AG04449 (cell line): ENCODE measurements at regions of chr6 and their contacts with region 1.

Region 1: GRCh38 chr6:83215131-83216047 is 22.2 kb downstream of the RWDD2A start:
- DNase-seq: no peak
- H3K4me3 ChIP-seq: no peak overlapping the region
- CTCF ChIP-seq: peak; percentile 86

Region 2: DNA sequence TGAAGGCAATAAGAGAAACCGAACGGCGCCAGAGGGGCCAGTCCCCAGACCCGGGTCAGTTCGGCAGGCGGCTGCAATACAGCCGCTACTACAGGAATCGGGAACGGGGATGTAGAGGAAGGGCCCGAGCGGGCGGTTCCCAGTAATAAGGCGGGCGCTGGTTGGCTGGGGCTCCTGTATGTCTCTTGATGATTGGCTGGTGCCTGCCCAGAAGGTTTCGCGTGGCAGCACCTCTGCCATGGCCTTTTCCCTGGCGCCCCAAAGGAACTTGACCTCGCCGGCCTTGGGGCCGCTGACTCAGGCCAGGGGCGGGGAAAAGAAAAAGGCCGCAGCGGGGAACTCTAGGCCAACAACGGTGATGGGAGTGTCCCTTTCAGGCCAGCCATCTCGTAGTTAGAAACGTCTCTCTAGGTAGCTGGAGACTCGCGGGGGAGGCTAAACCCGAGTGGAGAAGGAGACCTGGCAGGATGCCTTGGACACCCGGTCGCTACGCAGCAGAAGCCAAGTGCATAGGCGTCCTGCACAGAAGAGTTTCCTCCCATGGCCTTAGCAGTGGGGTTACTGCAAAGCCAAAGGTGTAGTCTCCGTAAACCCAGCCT is 967.7 kb before region 1 on chr6 and contains the start of gene IBTK:
- CTCF ChIA-PET with region 1: interaction called, 10 read pairs
- POLR2A ChIA-PET with region 1: no interaction called
- DNase-seq: no peak
- H3K4me3 ChIP-seq: peak within 1 kb of the TSS; percentile 77
- CTCF ChIP-seq: no peak

Region 3: GRCh38 chr6:83192871-83193746 is 22.3 kb before region 1 on chr6 and contains the starts of genes PGM3 and RWDD2A:
- CTCF ChIA-PET with region 1: interaction called, 33 read pairs
- POLR2A ChIA-PET with region 1: no interaction called
- DNase-seq: no peak
- H3K4me3 ChIP-seq: peak within 1 kb of the TSS; percentile 91
- CTCF ChIP-seq: no peak

Region 4: GRCh38 chr6:83199863-83200225 is 15.5 kb before region 1 on chr6:
- CTCF ChIA-PET with region 1: interaction called, 40 read pairs
- POLR2A ChIA-PET with region 1: no interaction called
- DNase-seq: no peak
- H3K4me3 ChIP-seq: no peak overlapping the region
- CTCF ChIP-seq: no peak

Region 5: DNA sequence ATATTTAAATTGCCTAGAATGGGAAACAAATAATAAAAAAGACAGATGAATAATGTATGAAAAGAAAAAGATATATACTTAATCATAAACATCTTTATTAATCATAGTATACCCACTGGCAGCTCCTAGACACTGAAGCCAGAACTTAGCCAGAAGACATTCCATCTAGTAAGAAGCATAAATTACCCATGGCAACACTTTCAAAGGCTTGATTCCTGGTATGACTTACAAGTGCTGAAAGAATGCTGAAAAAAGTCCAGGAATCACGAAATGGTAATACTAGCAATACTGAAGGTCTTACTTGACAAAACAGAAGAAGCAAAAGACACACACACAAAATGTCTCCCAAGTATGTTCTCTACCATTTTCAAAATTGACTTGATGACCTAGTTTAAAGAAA is 15.8 kb after region 1 on chr6:
- CTCF ChIA-PET with region 1: interaction called, 11 read pairs
- POLR2A ChIA-PET with region 1: no interaction called
- DNase-seq: peak; percentile 85
- H3K4me3 ChIP-seq: no peak overlapping the region
- CTCF ChIP-seq: no peak

Region 6: DNA sequence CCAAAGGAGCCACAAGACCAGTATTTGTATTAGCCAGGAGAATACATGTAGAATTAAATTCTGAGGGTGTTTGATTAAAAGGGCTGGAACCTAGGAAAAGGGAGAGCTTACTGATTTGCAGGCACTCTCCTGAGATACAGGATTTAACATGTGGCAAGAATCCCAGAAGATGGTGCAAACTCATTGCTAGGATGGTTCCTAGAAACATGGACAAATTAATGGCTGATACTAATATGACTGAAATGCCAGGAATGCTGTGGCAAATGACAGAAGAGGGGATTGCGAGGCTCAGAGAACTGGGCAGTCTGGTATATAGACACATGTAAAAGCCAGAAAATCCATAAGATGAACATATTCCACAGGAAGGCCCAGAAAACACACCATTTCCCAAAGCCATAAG is 95.8 kb after region 1 on chr6:
- CTCF ChIA-PET with region 1: no interaction called
- POLR2A ChIA-PET with region 1: no interaction called
- DNase-seq: peak; percentile 50
- H3K4me3 ChIP-seq: no peak overlapping the region
- CTCF ChIP-seq: no peak

Region 7: DNA sequence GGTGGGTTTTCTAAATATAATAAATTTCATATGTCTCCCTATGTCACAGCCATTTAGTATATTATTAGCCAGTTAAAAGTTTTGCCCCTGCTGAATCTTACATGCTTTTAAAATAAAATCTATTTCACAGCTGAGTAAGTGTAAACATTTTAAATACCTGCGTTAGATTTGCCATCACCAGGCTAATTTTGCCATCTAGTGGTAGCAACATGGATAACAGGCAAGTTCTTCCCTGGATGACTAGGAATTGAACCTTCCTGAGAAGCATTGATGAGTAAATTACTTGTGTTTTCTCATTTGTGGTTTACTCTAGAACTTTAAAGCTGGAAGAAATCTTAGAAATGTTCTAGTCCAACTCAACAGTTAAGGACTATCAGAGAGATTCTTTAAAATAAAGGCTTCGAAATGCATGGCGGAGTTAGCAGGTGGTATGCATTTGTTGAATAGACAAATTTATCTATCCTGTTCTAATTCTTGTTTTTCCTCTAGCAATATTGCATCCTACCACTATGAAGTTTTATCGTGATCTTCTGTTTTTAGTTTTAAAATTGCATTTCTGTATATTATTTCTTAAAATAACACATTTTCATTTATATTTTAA is 299.6 kb after region 1 on chr6:
- CTCF ChIA-PET with region 1: interaction called, 488 read pairs
- POLR2A ChIA-PET with region 1: no interaction called
- DNase-seq: peak; percentile 7
- H3K4me3 ChIP-seq: no peak overlapping the region
- CTCF ChIP-seq: peak; percentile 68